ENCODE measurements at regions of chr17 and their contacts with region 1.

Region 1: DNA sequence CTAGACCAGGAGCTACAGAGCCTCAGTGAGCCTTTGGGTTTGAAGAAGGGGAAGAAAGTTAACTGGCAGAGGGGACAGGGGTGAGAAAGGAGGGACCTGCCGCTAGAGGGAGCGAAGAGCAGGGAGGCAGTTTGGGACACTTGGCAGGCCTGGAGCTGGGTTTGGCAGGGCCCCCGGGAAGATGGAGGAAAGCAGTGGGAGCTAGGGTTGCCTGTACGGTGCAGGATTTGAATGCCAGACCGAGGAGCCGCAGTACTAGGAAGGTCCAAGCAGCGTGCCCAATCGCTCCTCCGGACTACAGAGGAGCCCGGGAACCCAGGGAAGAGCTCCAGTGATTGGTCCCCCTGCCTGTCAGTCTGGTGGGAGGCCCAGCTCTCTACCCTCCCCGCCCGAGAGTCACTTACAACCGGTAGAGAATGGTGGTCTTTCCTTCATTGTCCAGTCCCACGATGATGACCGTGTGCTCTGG is 1.3 kb downstream of the ARL5C start:
- DNase-seq: peak; percentile 90 to 91
- H3K4me3 ChIP-seq: peak overlapping the region; percentile 58 to 84 (median 77)
- H3K27ac ChIP-seq: no peak overlapping the region
- H3K4me1 ChIP-seq: peaks cover 0 to 8% (median 6%) of the 10 kb centered on the region in 4 experiments; a peak in 5 of 7 replicates
- H3K27me3 ChIP-seq: peaks cover 14 to 31% (median 25%) of the 10 kb centered on the region in 4 experiments
- CTCF ChIP-seq: peak; percentile 85 to 98 (median 95)
- EP300 ChIP-seq: no peak; a peak in 1 of 3 replicates
- POLR2A ChIP-seq: peak in 1 of 2 experiments; percentile 42; a peak in 1 of 3 replicates
- RAD21 ChIP-seq: peak; percentile 58 to 67

Region 2: GRCh38 chr17:39073916-39074315 is 90.8 kb before region 1 on chr17:
- CTCF ChIA-PET with region 1: no interaction called
- POLR2A ChIA-PET with region 1: no interaction called
- DNase-seq: no peak
- H3K4me3 ChIP-seq: no peak overlapping the region
- H3K27ac ChIP-seq: no peak overlapping the region
- H3K4me1 ChIP-seq: peaks cover 0 to 10% (median 3%) of the 10 kb centered on the region in 4 experiments; a peak in 4 of 7 replicates
- H3K27me3 ChIP-seq: no peaks in the 10 kb centered on the region
- CTCF ChIP-seq: no peak
- EP300 ChIP-seq: no peak
- POLR2A ChIP-seq: no peak
- RAD21 ChIP-seq: no peak

Region 3: DNA sequence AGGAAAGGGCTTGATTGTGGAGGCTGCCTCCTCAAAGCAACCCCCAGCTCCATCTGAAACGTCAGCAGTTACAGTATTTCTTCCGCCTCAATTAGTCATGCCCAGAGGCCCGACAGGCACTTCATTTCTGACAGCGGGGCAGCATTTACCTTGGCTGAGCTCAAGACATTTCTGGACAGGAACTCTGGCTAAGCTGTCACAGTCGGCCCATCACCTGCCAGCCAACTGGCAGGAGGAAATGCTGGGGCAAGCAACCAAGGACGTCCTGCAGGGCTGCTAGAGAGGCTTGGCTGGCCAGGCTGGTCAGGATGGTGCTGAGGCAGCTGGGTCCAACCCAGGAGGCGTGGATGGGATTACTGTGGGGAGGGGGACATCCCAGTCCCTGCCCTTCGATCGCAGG is 41.1 kb before region 1 on chr17:
- CTCF ChIA-PET with region 1: interaction called, 18 read pairs
- POLR2A ChIA-PET with region 1: no interaction called
- DNase-seq: no peak
- H3K4me3 ChIP-seq: no peak overlapping the region
- H3K27ac ChIP-seq: no peak overlapping the region
- H3K4me1 ChIP-seq: no peaks in the 10 kb centered on the region
- H3K27me3 ChIP-seq: no peaks in the 10 kb centered on the region
- CTCF ChIP-seq: no peak
- EP300 ChIP-seq: no peak
- POLR2A ChIP-seq: no peak
- RAD21 ChIP-seq: no peak

Region 4: GRCh38 chr17:39174907-39175694 is 10.4 kb after region 1 on chr17:
- CTCF ChIA-PET with region 1: interaction called, 151 read pairs
- POLR2A ChIA-PET with region 1: interaction called, 35 read pairs
- DNase-seq: peak; percentile 82 to 92
- H3K4me3 ChIP-seq: peak overlapping the region in 1 of 4 experiments; percentile 22; a peak in 1 of 8 replicates
- H3K27ac ChIP-seq: no peak overlapping the region
- H3K4me1 ChIP-seq: peaks cover 0 to 14% (median 10%) of the 10 kb centered on the region in 4 experiments; a peak in 6 of 7 replicates
- H3K27me3 ChIP-seq: no peaks in the 10 kb centered on the region
- CTCF ChIP-seq: peak; percentile 87 to 92 (median 91)
- EP300 ChIP-seq: no peak
- POLR2A ChIP-seq: peak in 1 of 2 experiments; percentile 60; a peak in 1 of 3 replicates
- RAD21 ChIP-seq: peak; percentile 71 to 83

Region 5: DNA sequence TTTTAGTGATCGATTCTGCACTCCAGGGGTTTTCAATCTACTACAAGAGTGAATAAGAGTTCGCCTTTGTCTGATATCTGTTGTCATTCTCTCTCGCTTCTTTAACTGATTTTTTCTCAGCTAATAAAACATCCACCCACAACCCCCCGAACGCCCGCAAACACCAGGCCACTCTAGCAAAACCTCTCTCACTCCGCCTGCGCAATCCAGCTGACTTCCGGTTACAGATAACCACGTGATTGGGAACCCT is 35.0 kb after region 1 on chr17:
- CTCF ChIA-PET with region 1: interaction called, 11 read pairs
- POLR2A ChIA-PET with region 1: interaction called, 14 read pairs
- DNase-seq: peak in 1 of 2 experiments; percentile 61
- H3K4me3 ChIP-seq: peak overlapping the region; percentile 85 to 96 (median 92); a peak in 7 of 8 replicates
- H3K27ac ChIP-seq: peak overlapping the region; percentile 99
- H3K4me1 ChIP-seq: peaks cover 4 to 26% (median 21%) of the 10 kb centered on the region in 4 experiments
- H3K27me3 ChIP-seq: no peaks in the 10 kb centered on the region
- CTCF ChIP-seq: no peak
- EP300 ChIP-seq: no peak
- POLR2A ChIP-seq: no peak
- RAD21 ChIP-seq: no peak

Region 6: DNA sequence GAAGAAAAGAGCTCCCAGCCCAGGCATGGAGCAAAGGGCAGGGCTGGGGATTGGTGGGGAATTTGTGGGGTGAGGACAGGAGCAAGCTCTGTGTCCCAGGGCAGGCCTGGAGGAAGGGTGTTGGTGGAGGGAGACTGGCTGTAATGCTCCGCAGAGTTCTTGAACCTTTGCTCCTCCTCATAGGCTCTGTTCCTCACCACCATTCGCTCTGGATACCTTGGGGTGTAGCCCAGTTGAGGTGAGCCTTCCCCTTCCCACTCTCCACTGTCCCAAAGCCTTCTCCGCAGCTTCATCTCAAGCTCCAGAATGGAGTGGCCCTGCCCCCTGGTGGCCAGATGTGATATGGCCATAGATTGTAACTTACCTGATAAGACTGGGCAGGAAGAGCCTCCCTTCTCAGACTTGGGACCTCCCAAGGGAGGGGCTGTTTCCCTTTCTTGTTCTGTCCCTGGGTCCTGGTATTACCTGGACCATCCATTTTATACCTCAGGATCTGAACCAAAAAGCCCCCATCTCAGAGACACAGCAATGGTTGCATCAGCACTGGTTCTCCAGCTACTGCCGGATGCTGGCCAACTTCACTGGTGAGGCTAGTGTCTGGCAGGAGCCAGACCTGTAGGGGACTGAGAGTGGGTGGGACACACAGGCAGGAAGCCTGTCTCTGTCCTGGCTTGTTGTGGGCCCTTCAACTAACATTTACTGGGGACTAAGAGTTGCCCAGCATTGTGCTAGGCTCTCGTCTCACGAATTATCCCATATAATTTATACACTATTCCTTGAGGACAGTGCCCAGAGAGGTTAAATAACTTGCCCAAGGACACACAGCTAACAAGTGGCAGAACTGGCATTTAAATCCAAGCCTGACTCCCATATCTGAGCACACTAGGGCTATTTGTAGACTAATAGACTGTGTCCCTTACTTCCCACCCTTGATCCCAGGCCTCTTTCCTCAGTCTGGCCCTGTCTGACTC is 80.2 kb after region 1 on chr17:
- CTCF ChIA-PET with region 1: interaction called, 22 read pairs
- POLR2A ChIA-PET with region 1: no interaction called
- DNase-seq: peak; percentile 93 to 99
- H3K4me3 ChIP-seq: no peak overlapping the region
- H3K27ac ChIP-seq: no peak overlapping the region
- H3K4me1 ChIP-seq: peaks cover 0 to 9% (median 5%) of the 10 kb centered on the region in 4 experiments; a peak in 6 of 7 replicates
- H3K27me3 ChIP-seq: no peaks in the 10 kb centered on the region
- CTCF ChIP-seq: peak; percentile 83 to 99 (median 93)
- EP300 ChIP-seq: no peak
- POLR2A ChIP-seq: no peak
- RAD21 ChIP-seq: peak; percentile 94 to 96

Measured in H1 (cell line).